Vagina (tissue), 2 donors: ENCODE measurements at regions of chr2 and their contacts with region 1.

Region 1: GRCh38 chr2:129347486-129348217 is 631.8 kb upstream of the RAB6C start:
- DNase-seq: no peak
- H3K4me3 ChIP-seq: no peak overlapping the region
- H3K27ac ChIP-seq: no peak overlapping the region
- H3K4me1 ChIP-seq: no peaks in the 10 kb centered on the region
- H3K27me3 ChIP-seq: no peaks in the 10 kb centered on the region
- CTCF ChIP-seq: no peak
- POLR2A ChIP-seq: no peak

Region 2: DNA sequence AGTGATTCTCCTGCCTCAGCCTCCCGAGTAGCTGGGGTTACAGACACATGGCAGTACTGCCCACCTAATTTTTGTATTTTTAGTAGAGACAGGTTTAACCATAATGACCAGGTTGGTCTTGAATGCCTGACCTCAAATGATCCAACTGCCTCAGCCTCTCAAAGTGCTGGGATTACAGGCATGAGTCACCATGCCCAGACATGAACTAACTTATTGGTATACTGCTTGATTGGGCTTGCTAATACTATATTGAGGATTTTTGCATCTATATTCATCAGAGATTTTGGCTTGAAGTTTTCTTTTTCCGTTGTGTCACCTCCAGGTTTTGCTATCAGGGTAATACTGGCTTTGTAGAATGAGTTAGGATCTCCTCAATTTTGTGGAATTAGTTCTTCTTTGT is 322.9 kb before region 1 on chr2:
- intact Hi-C with region 1: loop called (anchors 5 kb)
- DNase-seq: no peak
- H3K4me3 ChIP-seq: no peak overlapping the region
- H3K27ac ChIP-seq: no peak overlapping the region
- H3K4me1 ChIP-seq: no peaks in the 10 kb centered on the region
- H3K27me3 ChIP-seq: no peaks in the 10 kb centered on the region
- CTCF ChIP-seq: no peak
- POLR2A ChIP-seq: no peak

Region 3: DNA sequence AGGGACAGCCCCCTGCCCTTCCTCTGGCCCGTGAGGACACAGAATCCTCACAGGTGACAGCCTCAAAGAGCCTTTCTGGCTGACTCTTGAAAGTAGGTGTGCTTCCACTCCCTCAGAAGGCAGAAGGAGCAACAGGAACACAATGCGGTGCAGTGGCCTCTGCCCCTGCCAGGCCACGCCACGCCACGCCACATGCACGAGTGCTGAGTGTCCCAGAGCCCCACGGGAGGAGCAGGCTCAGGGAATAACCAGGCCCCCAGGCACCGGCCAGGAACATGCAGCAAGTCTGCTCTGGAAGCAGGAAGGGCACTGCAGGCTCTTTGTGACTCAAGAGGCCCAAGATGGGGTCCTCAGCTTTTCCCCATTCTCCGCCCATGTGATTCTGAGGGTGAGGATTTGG is 815.3 kb after region 1 on chr2:
- intact Hi-C with region 1: no loop called
- DNase-seq: no peak
- H3K4me3 ChIP-seq: no peak overlapping the region
- H3K27ac ChIP-seq: no peak overlapping the region
- H3K4me1 ChIP-seq: no peaks in the 10 kb centered on the region
- H3K27me3 ChIP-seq: no peaks in the 10 kb centered on the region
- CTCF ChIP-seq: no peak
- POLR2A ChIP-seq: no peak